SK-N-SH (cell line): ENCODE measurements at regions of chr17 and their contacts with region 1.

Region 1: GRCh38 chr17:29589524-29590410 is at the start of gene GIT1:
- DNase-seq: peak; percentile 98
- H3K4me3 ChIP-seq: peak within 1 kb of the TSS; percentile 89 to 91
- H3K27ac ChIP-seq: peak within 1 kb of the TSS; percentile 64 to 91
- H3K4me1 ChIP-seq: peaks cover 41 to 65% of the 10 kb centered on the region in 2 experiments
- H3K27me3 ChIP-seq: no peaks in the 10 kb centered on the region
- CTCF ChIP-seq: no peak
- EP300 ChIP-seq: no peak
- RAD21 ChIP-seq: no peak
- polyA plus RNA-seq, gene GIT1: 39.4 and 42.9 TPM in 2 replicates

Region 2: GRCh38 chr17:29376667-29377270 is 213.0 kb before region 1 on chr17:
- CTCF ChIA-PET with region 1: interaction called, 10 read pairs
- POLR2A ChIA-PET with region 1: no interaction called
- DNase-seq: no peak
- H3K4me3 ChIP-seq: peak overlapping the region in 1 of 2 experiments; percentile 17; a peak in 2 of 4 replicates
- H3K27ac ChIP-seq: peak overlapping the region in 1 of 2 experiments; percentile 73; a peak in 2 of 4 replicates
- H3K4me1 ChIP-seq: peaks cover 0 to 23% of the 10 kb centered on the region in 2 experiments; a peak in 2 of 4 replicates
- H3K27me3 ChIP-seq: no peaks in the 10 kb centered on the region
- CTCF ChIP-seq: no peak
- EP300 ChIP-seq: no peak
- RAD21 ChIP-seq: no peak

Region 3: DNA sequence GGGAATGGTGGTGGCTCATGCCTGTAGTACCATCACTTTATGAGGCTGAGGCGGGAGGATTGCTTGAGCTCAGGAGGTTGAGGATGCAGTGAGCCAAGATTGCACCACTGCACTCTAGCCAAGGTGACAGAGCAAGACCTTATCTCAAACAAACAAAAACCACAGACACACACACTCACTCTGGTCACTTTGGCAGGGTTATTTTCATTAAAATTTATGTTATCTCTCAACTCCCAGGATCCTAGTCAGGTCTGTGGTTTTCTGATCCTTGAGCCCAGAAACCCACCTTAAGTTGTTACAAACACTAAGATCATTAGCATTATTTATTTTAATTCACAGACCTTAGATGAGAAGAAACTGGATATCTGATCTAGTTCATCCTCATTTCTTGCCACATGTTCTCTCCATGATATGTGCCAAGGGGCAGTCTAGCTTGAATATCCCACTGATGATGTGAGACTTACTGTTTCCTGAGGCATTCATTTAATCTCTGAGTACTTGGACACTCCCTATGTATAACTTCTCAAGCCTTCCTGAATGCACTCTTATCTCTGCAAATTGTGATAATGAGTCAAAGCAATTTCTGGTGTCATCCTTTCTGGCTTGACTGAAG is 32.6 kb before region 1 on chr17:
- CTCF ChIA-PET with region 1: no interaction called
- POLR2A ChIA-PET with region 1: no interaction called
- DNase-seq: no peak
- H3K4me3 ChIP-seq: no peak overlapping the region
- H3K27ac ChIP-seq: no peak overlapping the region
- H3K4me1 ChIP-seq: peaks cover 0 to 2% of the 10 kb centered on the region in 2 experiments; a peak in 1 of 4 replicates
- H3K27me3 ChIP-seq: no peaks in the 10 kb centered on the region
- CTCF ChIP-seq: no peak
- EP300 ChIP-seq: no peak
- RAD21 ChIP-seq: no peak

Region 4: DNA sequence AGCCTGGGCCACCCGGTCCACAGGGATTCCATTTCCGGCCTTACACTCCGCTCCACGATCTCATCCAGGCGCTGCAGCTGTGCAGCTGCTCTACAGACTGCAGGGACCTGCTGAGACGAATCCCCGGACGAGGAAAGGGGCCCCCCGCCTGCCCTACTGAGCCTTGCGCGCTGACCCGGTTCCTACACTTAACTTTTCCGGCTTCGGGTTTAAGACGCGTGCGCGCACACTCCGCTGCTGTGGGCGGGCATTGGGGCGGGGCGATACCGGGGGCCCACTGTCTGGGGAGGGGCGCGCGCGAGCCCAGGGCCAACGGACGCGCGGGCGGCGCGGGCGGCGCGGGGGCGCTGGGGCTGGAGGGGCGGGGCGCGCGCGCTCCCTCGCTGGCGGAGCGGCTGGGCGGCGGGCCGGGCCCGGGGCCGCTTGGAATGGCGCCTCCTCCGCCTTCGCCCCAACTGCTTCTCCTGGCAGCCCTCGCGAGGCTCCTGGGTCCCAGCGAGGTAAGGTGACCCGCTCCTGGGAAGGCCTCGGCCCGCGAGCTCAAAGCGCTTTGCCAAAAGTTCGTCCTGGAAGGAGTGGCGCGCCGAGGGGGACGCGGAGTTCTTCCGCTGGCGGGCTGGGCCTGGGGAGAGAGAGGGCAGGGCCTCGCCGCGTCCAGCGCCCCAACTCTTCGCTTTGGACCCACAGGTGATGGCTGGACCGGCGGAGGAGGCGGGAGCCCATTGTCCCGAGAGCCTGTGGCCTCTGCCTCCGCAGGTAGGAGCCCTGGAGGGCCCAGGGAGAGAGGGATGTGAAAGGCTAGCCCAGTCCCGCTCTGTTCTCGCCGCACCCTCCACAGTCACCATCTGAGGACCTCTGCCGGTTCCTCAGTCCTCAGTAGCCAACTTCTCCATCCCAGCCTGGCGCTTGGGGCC is 21.2 kb before region 1 on chr17 and contains the start of gene TP53I13:
- CTCF ChIA-PET with region 1: interaction called, 166 read pairs
- POLR2A ChIA-PET with region 1: interaction called, 3 read pairs
- DNase-seq: peak; percentile 96
- H3K4me3 ChIP-seq: peak within 1 kb of the TSS; percentile 76 to 85
- H3K27ac ChIP-seq: peak within 1 kb of the TSS; percentile 77 to 89
- H3K4me1 ChIP-seq: peaks cover 8 to 27% of the 10 kb centered on the region in 2 experiments; a peak in 1 of 4 replicates
- H3K27me3 ChIP-seq: no peaks in the 10 kb centered on the region
- CTCF ChIP-seq: no peak
- EP300 ChIP-seq: no peak
- RAD21 ChIP-seq: no peak
- polyA plus RNA-seq, gene TP53I13: 39.2 and 45.3 TPM in 2 replicates

Region 5: GRCh38 chr17:29608891-29609361 is 19.2 kb after region 1 on chr17:
- CTCF ChIA-PET with region 1: interaction called, 17 read pairs
- POLR2A ChIA-PET with region 1: no interaction called
- DNase-seq: no peak
- H3K4me3 ChIP-seq: no peak overlapping the region
- H3K27ac ChIP-seq: no peak overlapping the region
- H3K4me1 ChIP-seq: no peaks in the 10 kb centered on the region
- H3K27me3 ChIP-seq: no peaks in the 10 kb centered on the region
- CTCF ChIP-seq: no peak
- EP300 ChIP-seq: no peak
- RAD21 ChIP-seq: no peak

Region 6: DNA sequence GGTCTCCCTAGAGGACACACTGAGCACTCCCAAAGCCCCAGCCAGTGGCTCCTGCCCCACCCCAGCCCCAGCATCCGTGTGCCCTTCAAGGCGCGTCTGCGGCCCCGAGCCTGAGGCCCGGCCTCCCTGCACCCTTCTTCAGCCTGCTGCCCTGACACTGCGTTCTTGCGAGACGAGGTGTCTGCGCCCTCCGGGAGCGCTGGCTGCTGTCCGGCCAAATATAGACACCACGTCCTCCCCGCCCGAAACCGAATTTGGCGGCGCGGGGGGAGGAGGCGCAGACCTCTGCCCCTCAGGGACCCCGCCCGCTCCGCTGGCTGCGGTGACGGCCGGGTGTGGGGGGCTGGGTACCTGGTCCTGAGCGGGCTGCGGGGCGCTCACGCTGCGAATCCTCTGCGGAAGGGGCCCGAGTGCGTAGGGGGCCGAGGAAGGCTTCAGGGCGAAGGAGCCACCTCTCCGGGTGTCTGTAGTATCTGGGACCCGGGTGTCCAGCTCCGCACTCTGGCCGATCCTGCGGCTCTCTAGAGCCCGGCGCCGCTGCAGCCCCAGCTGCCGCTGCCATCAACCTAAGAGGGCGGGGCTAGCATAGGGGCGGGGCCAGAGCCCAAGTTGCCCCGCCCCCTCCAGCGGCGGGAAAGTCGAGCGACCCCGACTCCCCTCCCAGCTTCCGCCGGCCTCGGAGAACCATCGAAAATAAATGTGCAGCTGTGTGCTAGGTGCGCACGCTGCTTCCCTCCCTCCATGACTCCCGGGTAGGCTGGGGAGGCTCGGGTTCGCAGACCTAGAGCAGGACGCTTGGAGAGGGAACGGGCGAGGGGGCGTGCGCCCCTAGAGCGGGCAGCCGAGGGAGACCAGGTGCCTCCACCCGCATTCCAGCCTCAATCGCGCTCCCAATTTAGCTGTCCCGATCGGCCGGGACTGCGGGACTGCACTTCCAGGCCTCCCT is 32.8 kb after region 1 on chr17 and contains the start of gene CORO6:
- CTCF ChIA-PET with region 1: interaction called, 15 read pairs
- POLR2A ChIA-PET with region 1: interaction called, 4 read pairs
- DNase-seq: peak; percentile 95
- H3K4me3 ChIP-seq: peak within 1 kb of the TSS; percentile 75 to 86
- H3K27ac ChIP-seq: peak within 1 kb of the TSS in 1 of 2 experiments; percentile 87; a peak in 2 of 4 replicates
- H3K4me1 ChIP-seq: peaks cover 20 to 77% of the 10 kb centered on the region in 2 experiments
- H3K27me3 ChIP-seq: no peaks in the 10 kb centered on the region
- CTCF ChIP-seq: no peak
- EP300 ChIP-seq: no peak
- RAD21 ChIP-seq: no peak
- polyA plus RNA-seq, gene CORO6: 18.4 and 28.1 TPM in 2 replicates

Region 7: DNA sequence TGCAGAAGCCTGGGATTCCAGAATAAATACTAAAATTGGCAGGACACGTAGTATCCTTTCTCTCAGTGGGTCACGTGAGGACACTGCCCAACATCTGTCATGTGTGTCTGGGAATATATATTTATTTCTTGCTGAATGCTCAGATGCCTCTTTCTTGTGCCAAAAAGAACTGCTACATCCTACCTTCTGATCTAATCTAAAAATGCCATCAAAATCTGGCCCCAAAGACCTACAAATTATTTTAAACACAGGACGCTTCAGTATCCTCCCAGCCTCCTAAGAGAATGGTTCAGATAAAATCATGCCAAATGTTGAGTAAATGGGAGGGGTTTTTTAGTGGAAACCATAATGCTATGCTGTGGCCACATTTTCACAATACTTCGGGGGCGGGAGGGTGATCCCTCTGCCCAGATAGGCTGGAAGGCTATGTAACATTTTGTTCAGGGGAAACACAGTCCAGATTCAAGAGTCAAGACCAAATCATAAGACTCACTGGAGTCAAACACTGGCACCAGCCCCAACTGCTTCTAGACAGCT is 55.8 kb after region 1 on chr17:
- CTCF ChIA-PET with region 1: interaction called, 16 read pairs
- POLR2A ChIA-PET with region 1: no interaction called
- DNase-seq: peak; percentile 55
- H3K4me3 ChIP-seq: no peak overlapping the region
- H3K27ac ChIP-seq: peak overlapping the region; percentile 75 to 94
- H3K4me1 ChIP-seq: peaks cover 44 to 50% of the 10 kb centered on the region in 2 experiments; a peak in 3 of 4 replicates
- H3K27me3 ChIP-seq: no peaks in the 10 kb centered on the region
- CTCF ChIP-seq: no peak
- EP300 ChIP-seq: peak; percentile 32 to 84; a peak in 3 of 4 replicates
- RAD21 ChIP-seq: no peak; the same call in 1 of the 2 replicates